PC-9 (cell line): ENCODE measurements at regions of chr1 and their contacts with region 1.

Region 1: GRCh38 chr1:29235955-29236684 is at the start of gene PTPRU:
- DNase-seq: peak in 1 of 2 experiments; percentile 83
- H3K4me3 ChIP-seq: peak within 1 kb of the TSS; percentile 97
- H3K27ac ChIP-seq: peak within 1 kb of the TSS; percentile 72
- H3K4me1 ChIP-seq: peaks cover 23% of the 10 kb centered on the region
- H3K27me3 ChIP-seq: no peaks in the 10 kb centered on the region
- CTCF ChIP-seq: peak; percentile 37; the same call in 1 of the 2 replicates
- total RNA-seq, gene PTPRU: 31.4 and 44.3 TPM in 2 replicates

Region 2: DNA sequence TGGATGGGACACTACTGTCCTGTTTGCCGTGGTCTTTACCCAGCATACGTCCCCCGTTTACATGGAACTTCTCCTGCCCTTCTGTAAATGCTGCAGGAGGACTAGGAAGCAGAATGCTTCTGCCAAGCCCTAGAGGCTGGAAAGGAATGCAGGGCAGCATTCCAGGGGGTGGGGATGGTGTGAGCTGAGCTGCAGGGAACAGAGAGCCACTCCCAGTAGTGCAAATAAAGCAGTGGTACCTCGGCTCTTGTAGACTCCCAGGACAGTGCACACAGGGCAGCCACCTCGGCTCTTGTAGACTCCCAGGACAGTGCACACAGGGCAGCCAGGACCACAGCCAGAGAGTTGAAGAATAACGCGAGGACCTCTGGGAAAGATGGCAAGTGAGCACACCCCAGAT is 35.6 kb after region 1 on chr1:
- CTCF ChIA-PET with region 1: no interaction called
- POLR2A ChIA-PET with region 1: no interaction called
- intact Hi-C with region 1: loop called (anchors 2 kb)
- DNase-seq: peak; percentile 83 to 84
- H3K4me3 ChIP-seq: no peak overlapping the region
- H3K27ac ChIP-seq: peak overlapping the region; percentile 58
- H3K4me1 ChIP-seq: peaks cover 24% of the 10 kb centered on the region
- H3K27me3 ChIP-seq: no peaks in the 10 kb centered on the region
- CTCF ChIP-seq: no peak

Region 3: DNA sequence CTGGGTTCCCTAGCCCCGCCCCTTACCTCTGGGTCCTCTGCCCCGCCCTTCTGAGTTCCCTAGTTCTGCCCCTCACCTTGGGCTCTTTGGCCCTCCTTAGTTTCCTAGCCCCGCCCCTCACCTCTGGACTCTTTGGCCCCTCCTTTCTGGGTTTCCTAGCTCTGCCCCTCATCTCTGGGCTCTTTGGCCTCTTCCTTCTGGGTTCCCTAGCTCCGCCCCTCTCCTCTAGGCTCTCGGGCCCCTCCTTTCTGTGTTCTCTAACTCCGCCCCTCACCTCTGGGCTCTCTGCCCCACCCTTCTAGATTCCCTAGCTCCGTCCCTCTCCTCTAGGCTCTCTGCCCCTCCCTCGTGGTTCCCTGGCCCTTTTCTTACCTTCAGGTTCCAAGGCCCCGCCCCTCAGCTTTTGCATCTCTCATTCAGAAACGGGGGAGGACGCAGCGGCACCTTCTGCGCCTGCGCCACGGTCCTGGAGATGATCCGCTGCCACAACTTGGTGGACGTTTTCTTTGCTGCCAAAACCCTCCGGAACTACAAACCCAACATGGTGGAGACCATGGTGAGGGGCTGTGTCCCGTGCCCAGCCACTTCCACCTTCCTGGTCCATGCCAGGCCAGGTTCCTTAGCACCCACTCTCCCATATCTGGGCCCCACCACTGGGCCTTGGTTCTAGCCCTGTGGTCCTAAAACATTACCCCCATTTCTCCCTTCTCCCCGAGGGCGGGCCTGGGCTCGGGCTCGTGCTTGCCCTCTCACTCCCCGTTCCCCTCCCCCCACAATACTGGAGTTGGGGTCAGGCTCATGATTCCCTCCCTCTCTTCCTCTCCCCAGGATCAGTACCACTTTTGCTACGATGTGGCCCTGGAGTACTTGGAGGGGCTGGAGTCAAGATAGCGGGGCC is 88.9 kb after region 1 on chr1:
- CTCF ChIA-PET with region 1: no interaction called
- POLR2A ChIA-PET with region 1: no interaction called
- intact Hi-C with region 1: loop called (anchors 5 kb)
- DNase-seq: peak in 1 of 2 experiments; percentile 14
- H3K4me3 ChIP-seq: no peak overlapping the region
- H3K27ac ChIP-seq: no peak overlapping the region
- H3K4me1 ChIP-seq: no peaks in the 10 kb centered on the region
- H3K27me3 ChIP-seq: no peaks in the 10 kb centered on the region
- CTCF ChIP-seq: no peak

Region 4: GRCh38 chr1:29688471-29689365 is 452.6 kb after region 1 on chr1:
- CTCF ChIA-PET with region 1: no interaction called
- POLR2A ChIA-PET with region 1: no interaction called
- intact Hi-C with region 1: loop called (anchors 5 kb)
- DNase-seq: no peak
- H3K4me3 ChIP-seq: no peak overlapping the region
- H3K27ac ChIP-seq: no peak overlapping the region
- H3K4me1 ChIP-seq: no peaks in the 10 kb centered on the region
- H3K27me3 ChIP-seq: no peaks in the 10 kb centered on the region
- CTCF ChIP-seq: no peak

Region 5: DNA sequence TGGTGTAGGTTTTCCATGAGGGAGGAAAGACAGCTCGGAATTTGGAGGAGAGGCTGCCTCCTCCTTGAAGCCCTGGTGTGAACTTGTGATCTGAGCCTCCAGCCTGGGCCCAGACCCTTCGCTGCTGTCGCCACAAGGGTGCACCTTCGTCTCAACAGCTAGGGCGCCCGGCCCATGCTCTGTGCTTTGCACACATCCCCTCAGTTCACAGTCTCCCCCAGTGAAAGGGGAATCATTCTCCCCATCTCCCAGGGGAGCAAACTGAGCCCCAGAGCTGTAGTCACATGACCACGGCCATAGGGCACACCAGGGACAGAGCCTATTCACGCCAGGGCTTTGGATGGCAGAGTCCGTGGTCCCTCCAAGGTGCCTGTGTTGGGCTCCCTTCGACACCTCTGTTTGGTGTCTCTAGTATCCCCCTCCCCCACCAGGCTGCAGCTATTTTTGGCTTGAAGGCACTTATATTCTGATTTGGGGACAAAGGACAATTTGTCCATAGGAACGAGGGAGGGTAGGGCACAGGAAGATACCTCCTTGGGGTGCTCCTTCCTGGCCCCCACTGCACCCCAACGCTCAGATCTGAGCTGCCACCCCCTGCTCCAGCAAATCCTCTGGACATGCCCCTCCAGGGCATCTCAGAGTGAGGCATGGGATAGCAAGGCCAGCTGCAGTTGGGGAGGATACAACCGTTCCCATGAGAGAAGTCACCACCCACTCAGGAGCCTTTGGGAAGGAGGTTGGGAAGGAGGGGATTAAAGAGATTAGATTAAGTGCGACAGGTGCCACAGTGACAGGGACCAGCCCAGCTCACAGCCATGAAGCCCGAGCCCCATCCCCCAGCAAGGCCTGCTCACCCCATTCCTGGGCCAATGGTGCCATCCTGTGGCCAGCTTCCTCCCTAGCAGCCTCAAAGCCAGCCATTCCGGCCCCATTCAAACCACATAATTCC is 1471.6 kb after region 1 on chr1:
- CTCF ChIA-PET with region 1: no interaction called
- POLR2A ChIA-PET with region 1: no interaction called
- intact Hi-C with region 1: loop called (anchors 2 kb)
- DNase-seq: peak in 1 of 2 experiments; percentile 75
- H3K4me3 ChIP-seq: no peak overlapping the region
- H3K27ac ChIP-seq: no peak overlapping the region
- H3K4me1 ChIP-seq: no peaks in the 10 kb centered on the region
- H3K27me3 ChIP-seq: no peaks in the 10 kb centered on the region
- CTCF ChIP-seq: peak; percentile 85